Dendritic cell treated with granulocyte-macrophage colony-stimulating factor and Interleukin-4, amounts not matched to agents 40 ng/mL and 50 ng/mL, for 4 days (primary cell): ENCODE measurements at regions of chr9 and their contacts with region 1.

Region 1: DNA sequence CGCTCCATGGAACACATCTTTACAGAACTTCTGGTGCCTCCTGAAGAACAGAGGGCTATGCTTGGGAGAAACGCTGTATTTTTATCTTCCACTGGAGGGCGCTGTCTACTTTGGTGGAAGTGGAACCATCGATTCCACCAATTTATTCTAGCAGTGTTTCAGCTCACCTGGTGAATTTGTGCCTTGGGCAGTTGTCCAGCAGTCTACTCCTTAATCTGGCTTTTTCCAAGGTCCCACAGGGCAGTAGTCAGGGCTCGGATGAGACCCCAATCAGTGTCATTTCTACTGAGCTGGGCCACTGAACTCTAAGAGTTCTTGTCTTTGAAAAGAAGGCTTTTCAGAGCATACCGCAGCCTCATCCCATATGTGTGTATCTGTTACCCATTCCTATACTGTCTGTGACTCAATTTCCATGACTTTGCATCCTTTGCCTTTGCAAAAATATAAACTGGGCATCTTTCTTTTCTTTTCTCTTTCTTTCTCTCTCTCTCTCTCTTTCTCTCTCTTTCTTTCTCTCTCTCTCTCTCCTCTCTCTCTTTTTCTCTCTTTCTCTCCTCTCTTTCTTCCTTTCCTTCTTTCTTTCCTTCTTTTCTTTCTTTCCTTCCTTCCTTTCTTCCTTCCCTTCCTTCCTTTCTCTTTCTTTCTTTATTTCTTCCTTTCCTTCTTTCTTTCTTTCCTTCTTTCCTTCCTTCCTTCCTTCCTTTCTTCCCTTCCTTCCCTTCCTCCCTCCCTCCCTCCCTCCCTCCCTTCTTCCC is 138.4 kb upstream of the ZNF618 start:
- H3K4me3 Mint-ChIP-seq: no peak overlapping the region
- H3K27ac Mint-ChIP-seq: no peak overlapping the region
- H3K4me1 Mint-ChIP-seq: no peaks in the 10 kb centered on the region
- H3K27me3 Mint-ChIP-seq: peaks cover 9% of the 10 kb centered on the region

Region 2: GRCh38 chr9:113178087-113178486 is 559.6 kb before region 1 on chr9:
- intact Hi-C with region 1: loop called (anchors 10 kb)
- H3K4me3 Mint-ChIP-seq: no peak overlapping the region
- H3K27ac Mint-ChIP-seq: no peak overlapping the region
- H3K4me1 Mint-ChIP-seq: peaks cover 37% of the 10 kb centered on the region
- H3K27me3 Mint-ChIP-seq: no peaks in the 10 kb centered on the region

Region 3: DNA sequence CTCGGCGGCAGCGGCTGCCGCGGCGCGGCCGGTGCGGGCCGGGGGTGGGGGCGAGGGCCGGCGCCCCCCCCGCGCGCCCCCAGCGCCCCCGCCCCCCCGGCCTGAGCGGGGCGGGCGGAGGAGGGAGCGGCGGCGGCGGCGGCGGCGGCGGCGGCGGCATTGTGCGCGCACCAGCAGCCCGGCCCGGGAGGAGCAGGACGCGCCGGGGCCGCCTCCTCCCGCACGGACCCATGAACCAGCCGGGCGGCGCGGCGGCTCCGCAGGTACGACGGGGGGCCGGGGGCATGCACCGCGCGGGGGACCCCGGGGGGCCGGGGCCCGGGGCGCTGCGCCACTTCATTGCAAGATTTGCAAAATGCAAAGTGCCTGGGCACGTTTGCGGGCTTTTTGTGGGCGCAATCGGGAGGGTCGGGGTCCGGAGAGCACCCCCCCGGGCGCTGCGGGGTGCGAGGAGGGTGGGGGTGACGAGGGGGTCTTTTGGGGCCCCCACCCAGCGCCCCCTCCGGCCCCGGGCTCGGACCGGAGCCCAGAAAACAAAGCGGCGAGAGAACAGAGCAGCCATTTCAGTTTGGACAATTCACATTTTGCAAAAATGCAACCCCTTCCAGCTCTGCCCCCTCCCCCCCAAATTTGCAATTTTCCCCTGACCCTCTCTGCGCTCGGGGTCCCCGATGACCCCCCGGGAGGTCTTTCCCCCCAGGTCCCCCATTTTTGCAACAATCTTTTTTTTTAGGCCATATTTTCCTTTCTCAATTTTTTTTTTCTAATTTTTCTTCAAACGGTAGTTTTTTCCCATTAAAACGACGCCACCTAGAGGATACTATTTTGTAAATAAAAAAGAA is 138.7 kb after region 1 on chr9 and contains the start of gene ZNF618:
- intact Hi-C with region 1: loop called (anchors 2 kb)
- H3K4me3 Mint-ChIP-seq: peak within 1 kb of the TSS; percentile 93
- H3K27ac Mint-ChIP-seq: peak within 1 kb of the TSS; percentile 89
- H3K4me1 Mint-ChIP-seq: peaks cover 10% of the 10 kb centered on the region
- H3K27me3 Mint-ChIP-seq: peaks cover 11% of the 10 kb centered on the region

Region 4: GRCh38 chr9:113963017-113963620 is 225.4 kb after region 1 on chr9:
- intact Hi-C with region 1: loop called (anchors 1 kb)
- H3K4me3 Mint-ChIP-seq: no peak overlapping the region
- H3K27ac Mint-ChIP-seq: no peak overlapping the region
- H3K4me1 Mint-ChIP-seq: no peaks in the 10 kb centered on the region
- H3K27me3 Mint-ChIP-seq: no peaks in the 10 kb centered on the region